ENCODE measurements at regions of chr17 and their contacts with region 1.

Region 1: GRCh38 chr17:40474419-40475002 is 26.9 kb downstream of the TNS4 start:
- DNase-seq: no peak
- H3K4me3 Mint-ChIP-seq: no peak overlapping the region
- H3K27ac Mint-ChIP-seq: no peak overlapping the region
- H3K4me1 Mint-ChIP-seq: peaks cover 30% of the 10 kb centered on the region
- H3K27me3 Mint-ChIP-seq: peaks cover 11% of the 10 kb centered on the region

Region 2: DNA sequence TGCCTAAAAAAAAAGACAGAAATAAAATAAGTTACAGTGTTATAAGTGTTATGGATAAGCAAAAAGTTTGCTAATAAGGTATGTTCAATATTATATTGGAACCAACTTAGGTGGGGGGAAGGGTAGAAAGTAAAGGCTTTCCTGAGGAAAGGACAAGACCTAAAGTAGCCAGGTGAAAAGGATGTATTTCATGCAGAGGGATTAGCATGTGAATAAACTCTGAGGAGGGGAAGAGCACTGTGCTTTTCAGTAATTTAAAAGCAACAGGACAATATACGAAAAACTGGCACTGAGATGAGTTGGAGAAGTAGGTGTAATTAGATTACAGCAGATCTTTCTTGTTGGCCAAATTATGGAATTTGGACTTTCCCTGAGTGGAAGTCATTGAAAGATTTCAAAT is 64.4 kb before region 1 on chr17:
- CTCF ChIA-PET with region 1: interaction called, 10 read pairs
- POLR2A ChIA-PET with region 1: interaction called, 3 read pairs
- DNase-seq: no peak
- H3K4me3 Mint-ChIP-seq: no peak overlapping the region
- H3K27ac Mint-ChIP-seq: peak overlapping the region; percentile 1
- H3K4me1 Mint-ChIP-seq: peaks cover 38% of the 10 kb centered on the region
- H3K27me3 Mint-ChIP-seq: no peaks in the 10 kb centered on the region

Region 3: DNA sequence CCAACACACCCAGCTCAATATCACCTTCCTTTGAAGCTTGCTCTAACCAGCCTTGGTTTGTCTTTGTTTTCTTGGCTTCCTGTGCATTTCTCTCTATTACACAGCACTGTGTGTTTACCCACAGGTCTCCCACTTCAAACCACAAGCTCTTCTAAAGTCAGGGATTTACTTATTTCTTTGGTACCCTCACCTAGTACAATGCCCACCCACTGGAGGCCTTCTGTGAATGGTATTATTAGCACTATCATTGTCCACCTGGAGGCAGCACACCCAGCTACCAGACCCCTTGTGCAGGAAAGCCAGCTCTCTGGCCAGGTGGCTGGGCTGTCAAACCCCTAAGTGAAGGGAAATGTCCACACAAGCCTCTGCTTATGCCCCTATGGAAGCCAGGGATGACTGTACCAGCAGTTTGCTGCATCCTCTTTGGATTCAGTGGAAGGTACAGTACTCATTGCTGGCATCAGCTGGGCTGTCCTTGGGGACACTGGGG is 47.5 kb before region 1 on chr17:
- CTCF ChIA-PET with region 1: interaction called, 11 read pairs
- POLR2A ChIA-PET with region 1: interaction called, 5 read pairs
- DNase-seq: peak; percentile 35
- H3K4me3 Mint-ChIP-seq: no peak overlapping the region
- H3K27ac Mint-ChIP-seq: peak overlapping the region; percentile 67
- H3K4me1 Mint-ChIP-seq: peaks cover 29% of the 10 kb centered on the region
- H3K27me3 Mint-ChIP-seq: peaks cover 31% of the 10 kb centered on the region

Region 4: GRCh38 chr17:40490289-40490853 is 15.9 kb after region 1 on chr17:
- CTCF ChIA-PET with region 1: interaction called, 11 read pairs
- POLR2A ChIA-PET with region 1: interaction called, 7 read pairs
- DNase-seq: peak; percentile 30
- H3K4me3 Mint-ChIP-seq: no peak overlapping the region
- H3K27ac Mint-ChIP-seq: no peak overlapping the region
- H3K4me1 Mint-ChIP-seq: peaks cover 60% of the 10 kb centered on the region
- H3K27me3 Mint-ChIP-seq: peaks cover 5% of the 10 kb centered on the region

Region 5: GRCh38 chr17:40510328-40510648 is 35.8 kb after region 1 on chr17:
- CTCF ChIA-PET with region 1: interaction called, 11 read pairs
- POLR2A ChIA-PET with region 1: interaction called, 115 read pairs
- DNase-seq: no peak
- H3K4me3 Mint-ChIP-seq: no peak overlapping the region
- H3K27ac Mint-ChIP-seq: no peak overlapping the region
- H3K4me1 Mint-ChIP-seq: peaks cover 27% of the 10 kb centered on the region
- H3K27me3 Mint-ChIP-seq: peaks cover 9% of the 10 kb centered on the region

Region 6: GRCh38 chr17:40516581-40517285 is 42.2 kb after region 1 on chr17:
- CTCF ChIA-PET with region 1: interaction called, 20 read pairs
- POLR2A ChIA-PET with region 1: interaction called, 115 read pairs
- DNase-seq: peak; percentile 87
- H3K4me3 Mint-ChIP-seq: peak overlapping the region; percentile 80
- H3K27ac Mint-ChIP-seq: peak overlapping the region; percentile 92
- H3K4me1 Mint-ChIP-seq: peaks cover 80% of the 10 kb centered on the region
- H3K27me3 Mint-ChIP-seq: peaks cover 2% of the 10 kb centered on the region

Region 7: GRCh38 chr17:40536295-40537171 is 62.0 kb after region 1 on chr17:
- CTCF ChIA-PET with region 1: interaction called, 57 read pairs
- POLR2A ChIA-PET with region 1: interaction called, 110 read pairs
- DNase-seq: no peak
- H3K4me3 Mint-ChIP-seq: no peak overlapping the region
- H3K27ac Mint-ChIP-seq: no peak overlapping the region
- H3K4me1 Mint-ChIP-seq: peaks cover 73% of the 10 kb centered on the region
- H3K27me3 Mint-ChIP-seq: peaks cover 32% of the 10 kb centered on the region

Region 8: GRCh38 chr17:40568074-40568836 is 93.7 kb after region 1 on chr17:
- CTCF ChIA-PET with region 1: no interaction called
- POLR2A ChIA-PET with region 1: no interaction called
- DNase-seq: no peak
- H3K4me3 Mint-ChIP-seq: no peak overlapping the region
- H3K27ac Mint-ChIP-seq: no peak overlapping the region
- H3K4me1 Mint-ChIP-seq: peaks cover 31% of the 10 kb centered on the region
- H3K27me3 Mint-ChIP-seq: peaks cover 55% of the 10 kb centered on the region

Measured in activated CD4-positive, alpha-beta memory T cell treated with anti-CD3 and anti-CD28 coated beads, Interleukin-2, amount 10 ng/mL, durations not matched to agents 7 days and 5 days (primary cell).